Left cardiac atrium (tissue), 4 donors: ENCODE measurements at regions of chr2 and their contacts with region 1.

Region 1: DNA sequence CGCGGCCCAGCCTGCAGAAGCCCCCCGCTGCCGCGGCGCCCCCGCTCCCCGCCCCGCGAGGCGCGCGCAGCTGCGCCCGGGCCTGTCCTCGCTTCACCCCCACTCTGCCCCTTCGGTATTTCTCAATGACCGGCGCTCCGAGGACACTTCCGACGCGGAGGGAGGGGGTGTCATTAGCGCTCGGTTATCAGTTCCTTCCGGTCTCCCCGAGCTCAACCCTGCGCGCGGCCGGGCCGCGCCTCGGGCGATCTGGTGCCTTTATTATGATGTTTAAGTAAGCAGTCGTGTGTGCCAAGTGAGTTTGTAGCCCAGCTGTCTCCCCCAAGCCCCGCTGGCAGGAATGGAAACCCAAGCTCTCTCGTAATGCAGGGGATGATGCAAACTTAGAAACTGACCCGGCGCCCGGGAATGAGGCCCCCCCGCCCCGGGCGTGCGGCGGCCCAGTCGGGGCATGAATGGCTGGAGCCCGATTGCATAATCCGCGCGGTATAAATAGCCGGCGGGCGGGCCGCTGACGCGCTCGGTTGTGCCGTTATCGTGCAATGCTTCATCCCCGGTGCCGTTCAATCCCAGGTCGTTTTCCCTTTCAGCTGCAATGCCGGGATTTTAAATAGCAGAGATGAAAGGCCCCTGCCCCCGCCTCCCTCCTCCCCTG is 3.9 kb upstream of the SPRED2 start:
- DNase-seq: peak; percentile 95
- ATAC-seq: peak; percentile 72 to 79

Region 2: GRCh38 chr2:65278531-65278981 is 157.7 kb before region 1 on chr2:
- intact Hi-C with region 1: no loop called
- DNase-seq: no peak
- ATAC-seq: peak in 1 of 2 donors; percentile 56

Region 3: GRCh38 chr2:65320042-65320725 is 116.1 kb before region 1 on chr2:
- intact Hi-C with region 1: no loop called
- DNase-seq: no peak
- ATAC-seq: peak; percentile 48 to 84

Region 4: DNA sequence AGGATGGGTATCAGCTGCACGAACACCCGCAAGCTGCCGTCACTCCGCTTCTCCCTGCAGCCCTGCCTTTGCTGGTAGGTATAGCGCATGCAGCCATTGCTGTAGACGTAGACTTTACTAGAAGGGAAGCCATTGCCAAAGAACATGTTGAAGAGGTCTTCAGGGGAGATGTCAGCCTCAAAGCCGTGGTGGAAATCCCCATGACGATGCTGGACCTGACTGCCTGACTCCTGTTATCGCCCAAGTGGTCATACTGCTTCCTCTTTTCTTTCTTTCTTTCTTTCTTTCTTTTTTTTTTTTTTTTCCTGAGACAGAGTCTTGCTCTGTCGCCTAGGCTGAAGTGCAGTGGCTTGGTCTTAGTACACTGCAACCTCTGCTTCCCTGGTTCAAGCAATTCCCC is 64.8 kb after region 1 on chr2:
- intact Hi-C with region 1: no loop called
- DNase-seq: no peak
- ATAC-seq: no peak

Region 5: GRCh38 chr2:65554765-65555591 is 118.7 kb after region 1 on chr2:
- intact Hi-C with region 1: loop called in 1 of 2 experiments (anchors 5 kb)
- DNase-seq: no peak
- ATAC-seq: peak in 1 of 2 donors; percentile 31

Region 6: GRCh38 chr2:65638443-65638842 is 202.1 kb after region 1 on chr2:
- intact Hi-C with region 1: no loop called
- DNase-seq: no peak
- ATAC-seq: no peak